Activated CD4-positive, alpha-beta memory T cell treated with anti-CD3 and anti-CD28 coated beads for 36 hours (primary cell): ENCODE measurements at regions of chr9 and their contacts with region 1.

Region 1: GRCh38 chr9:35738186-35738585 is 5.7 kb downstream of the CREB3 start:
- DNase-seq: no peak
- H3K4me3 Mint-ChIP-seq: no peak overlapping the region
- H3K27ac Mint-ChIP-seq: no peak overlapping the region
- H3K4me1 Mint-ChIP-seq: peaks cover 25% of the 10 kb centered on the region
- H3K27me3 Mint-ChIP-seq: no peaks in the 10 kb centered on the region

Region 2: DNA sequence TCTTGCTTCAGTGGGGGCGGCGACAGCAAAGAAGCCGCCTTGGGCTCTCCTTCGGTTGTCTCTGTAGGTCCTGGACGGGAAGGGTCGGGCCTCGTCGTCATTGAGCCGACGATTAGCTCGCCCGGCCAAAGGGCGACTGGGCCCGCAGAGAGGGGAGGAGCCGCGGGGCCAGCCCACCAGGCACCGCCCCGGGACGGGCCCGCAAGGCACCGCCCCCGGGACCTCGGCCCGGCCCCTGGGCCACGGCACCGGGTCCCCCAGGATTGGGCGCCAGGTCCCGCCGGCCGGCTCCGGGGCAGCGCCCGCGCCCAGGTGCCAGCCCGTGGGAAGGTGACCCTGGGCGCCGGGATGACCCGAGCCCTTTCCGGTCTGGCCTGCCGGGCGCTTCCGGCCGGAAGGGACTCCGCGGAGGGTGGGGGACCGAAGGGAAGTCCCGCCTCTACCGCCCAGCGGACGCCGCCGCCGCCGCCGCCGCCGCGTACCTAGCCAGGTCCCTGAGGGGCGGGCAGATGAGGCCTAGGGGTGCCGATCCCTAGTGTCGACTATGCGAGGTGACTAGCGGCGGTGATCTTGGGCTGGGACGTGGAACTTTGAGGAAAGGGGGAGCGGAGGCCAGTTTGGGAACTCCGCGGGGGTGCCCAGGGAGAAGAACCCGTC is 10.8 kb after region 1 on chr9 and contains the starts of genes GBA2 and RGP1:
- CTCF ChIA-PET with region 1: interaction called, 82 read pairs
- POLR2A ChIA-PET with region 1: interaction called, 20 read pairs
- intact Hi-C with region 1: loop called (anchors 1 kb)
- DNase-seq: peak; percentile 82
- H3K4me3 Mint-ChIP-seq: peak within 1 kb of the TSS; percentile 93
- H3K27ac Mint-ChIP-seq: peak within 1 kb of the TSS; percentile 88
- H3K4me1 Mint-ChIP-seq: peaks cover 37% of the 10 kb centered on the region
- H3K27me3 Mint-ChIP-seq: no peaks in the 10 kb centered on the region
- total RNA-seq, gene GBA2: 30.4 to 30.7 TPM
- total RNA-seq, gene RGP1: 17.4 to 18.0 TPM

Region 3: GRCh38 chr9:35756275-35757225 is 18.4 kb after region 1 on chr9:
- CTCF ChIA-PET with region 1: interaction called, 24 read pairs
- POLR2A ChIA-PET with region 1: interaction called, 13 read pairs
- intact Hi-C with region 1: loop called (anchors 2 kb)
- DNase-seq: peak; percentile 89
- H3K4me3 Mint-ChIP-seq: peak overlapping the region; percentile 96
- H3K27ac Mint-ChIP-seq: peak overlapping the region; percentile 95
- H3K4me1 Mint-ChIP-seq: peaks cover 35% of the 10 kb centered on the region
- H3K27me3 Mint-ChIP-seq: no peaks in the 10 kb centered on the region